ENCODE measurements at regions of chr2 and their contacts with region 1.

Region 1: DNA sequence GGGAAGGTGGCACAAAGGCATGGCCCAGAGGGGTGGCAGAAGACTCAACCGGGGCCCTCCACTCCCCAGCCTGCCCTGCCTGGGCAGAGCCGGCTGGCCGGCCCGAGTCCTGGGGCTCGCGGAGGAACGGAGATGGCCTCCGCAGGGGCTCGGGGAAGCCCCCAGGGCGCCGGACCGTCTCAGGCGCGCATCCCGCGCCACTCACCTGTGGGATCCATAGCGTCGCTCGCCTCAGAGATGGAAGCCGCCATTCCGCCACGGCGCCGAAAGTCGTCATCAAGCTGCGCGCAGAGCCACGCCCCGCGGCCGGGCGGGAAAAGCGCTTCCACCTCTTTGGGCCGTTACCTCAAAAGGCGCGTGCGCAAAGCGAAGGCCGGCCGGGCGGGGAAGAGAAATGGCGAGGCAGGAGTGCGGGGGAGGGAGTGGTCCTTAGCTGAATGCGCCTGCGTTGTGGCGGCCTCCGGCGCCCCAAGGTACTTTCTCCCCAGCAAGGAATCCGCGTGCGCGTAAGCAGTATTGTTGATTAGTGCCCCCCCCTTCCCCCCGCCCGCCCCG is at the start of gene SMPD4:
- DNase-seq: peak; percentile 85
- H3K4me3 ChIP-seq: peak within 1 kb of the TSS; percentile 90
- H3K27ac ChIP-seq: peak within 1 kb of the TSS; percentile 61
- H3K27me3 ChIP-seq: no peaks in the 10 kb centered on the region
- CTCF ChIP-seq: no peak
- polyA plus RNA-seq, gene SMPD4: 29.5 and 29.6 TPM in 2 replicates

Region 2: GRCh38 chr2:130169896-130170295 is 11.5 kb before region 1 on chr2:
- CTCF ChIA-PET with region 1: interaction called, 10 read pairs
- POLR2A ChIA-PET with region 1: no interaction called
- DNase-seq: no peak
- H3K4me3 ChIP-seq: no peak overlapping the region
- H3K27ac ChIP-seq: no peak overlapping the region
- H3K27me3 ChIP-seq: no peaks in the 10 kb centered on the region
- CTCF ChIP-seq: no peak

Region 3: DNA sequence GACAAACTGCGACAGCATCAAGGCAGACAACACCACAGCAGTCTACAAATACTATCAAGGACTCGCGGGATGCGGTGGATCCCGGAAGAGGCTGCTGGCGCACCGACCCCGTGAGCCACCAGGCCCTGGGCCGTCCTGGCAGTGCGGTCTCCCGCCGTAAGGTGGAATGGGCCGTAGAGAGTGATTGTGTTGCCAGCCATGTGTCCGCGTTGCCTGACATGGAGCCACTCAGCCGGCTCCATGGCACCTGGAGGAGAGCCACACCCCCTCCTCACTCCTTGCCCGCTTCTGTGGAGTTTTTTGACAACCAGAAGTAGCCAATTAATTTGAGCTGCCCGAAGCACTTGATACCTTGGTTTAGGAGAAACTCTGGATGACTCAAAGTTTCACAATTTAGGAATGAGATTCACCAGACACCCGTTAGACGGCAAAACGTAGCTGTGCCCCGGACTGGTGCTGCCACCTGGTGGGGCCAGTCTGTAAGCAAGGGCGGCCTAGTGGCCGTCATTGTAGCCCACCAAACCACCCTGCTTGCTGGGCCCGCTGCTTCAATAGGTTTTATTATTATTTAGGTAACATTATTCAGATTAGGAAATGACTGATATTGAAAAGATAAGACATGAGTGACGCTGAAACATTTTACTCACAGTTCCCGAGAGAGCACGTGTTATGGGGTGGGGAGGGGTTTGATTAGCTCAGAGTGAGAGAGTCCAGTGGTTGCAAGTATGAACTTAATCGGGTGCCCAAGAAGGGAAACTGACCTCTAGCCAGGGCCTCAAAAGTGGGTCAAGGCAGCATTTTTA is 151.1 kb after region 1 on chr2:
- CTCF ChIA-PET with region 1: interaction called, 35 read pairs
- POLR2A ChIA-PET with region 1: interaction called, 3 read pairs
- DNase-seq: no peak
- H3K4me3 ChIP-seq: no peak overlapping the region
- H3K27ac ChIP-seq: no peak overlapping the region
- H3K27me3 ChIP-seq: peaks cover 10% of the 10 kb centered on the region
- CTCF ChIP-seq: peak; percentile 99

Region 4: GRCh38 chr2:130342533-130343275 is 161.3 kb after region 1 on chr2 and contains the start of gene IMP4:
- CTCF ChIA-PET with region 1: interaction called, 20 read pairs
- POLR2A ChIA-PET with region 1: interaction called, 12 read pairs
- DNase-seq: peak; percentile 98
- H3K4me3 ChIP-seq: peak within 1 kb of the TSS; percentile 95
- H3K27ac ChIP-seq: peak within 1 kb of the TSS; percentile 94
- H3K27me3 ChIP-seq: no peaks in the 10 kb centered on the region
- CTCF ChIP-seq: peak; percentile 42
- polyA plus RNA-seq, gene IMP4: 51.0 and 79.5 TPM in 2 replicates

Measured in AG04450 (cell line).